Aorta (tissue), 5 donors: ENCODE measurements at regions of chr19 and their contacts with region 1.

Region 1: GRCh38 chr19:10269333-10270179 is 1.4 kb upstream of the ICAM1 start:
- DNase-seq: peak; percentile 92 to 95
- ATAC-seq: peak; percentile 90
- H3K4me3 ChIP-seq: no peak overlapping the region
- H3K27ac ChIP-seq: no peak overlapping the region
- H3K4me1 ChIP-seq: no peaks in the 10 kb centered on the region
- H3K27me3 ChIP-seq: no peaks in the 10 kb centered on the region

Region 2: GRCh38 chr19:10388957-10389356 is 119.4 kb after region 1 on chr19:
- intact Hi-C with region 1: loop called (anchors 1 to 2 kb)
- DNase-seq: peak; percentile 91 to 96
- ATAC-seq: peak; percentile 63
- H3K4me3 ChIP-seq: no peak overlapping the region
- H3K27ac ChIP-seq: no peak overlapping the region
- H3K4me1 ChIP-seq: no peaks in the 10 kb centered on the region
- H3K27me3 ChIP-seq: no peaks in the 10 kb centered on the region